ENCODE measurements at regions of chr17 and their contacts with region 1.

Region 1: DNA sequence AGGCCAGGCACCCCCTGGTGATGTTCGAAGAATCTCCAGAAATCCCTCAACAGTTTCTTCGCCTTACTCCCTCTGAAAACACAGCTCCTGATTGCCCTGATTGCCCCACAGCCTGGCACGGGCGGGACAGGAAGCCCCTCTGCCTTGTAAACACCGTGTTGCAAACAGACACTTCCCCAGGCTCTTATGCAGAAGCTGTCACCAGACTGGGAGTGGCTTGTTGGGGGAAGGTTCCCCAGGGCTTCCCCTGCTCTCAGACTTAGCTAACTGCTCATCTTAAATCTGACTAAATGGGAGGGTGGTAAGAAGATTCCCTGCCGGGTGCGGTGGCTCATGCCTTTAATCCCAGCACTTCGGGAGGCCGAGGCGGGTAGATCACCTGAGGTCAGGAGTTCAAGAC is 11.2 kb downstream of the PIK3R5 start:
- DNase-seq: peak; percentile 78
- H3K4me3 Mint-ChIP-seq: peak overlapping the region; percentile 36
- H3K27ac Mint-ChIP-seq: peak overlapping the region; percentile 73
- H3K4me1 Mint-ChIP-seq: peaks cover 97% of the 10 kb centered on the region
- H3K27me3 Mint-ChIP-seq: no peaks in the 10 kb centered on the region

Region 2: DNA sequence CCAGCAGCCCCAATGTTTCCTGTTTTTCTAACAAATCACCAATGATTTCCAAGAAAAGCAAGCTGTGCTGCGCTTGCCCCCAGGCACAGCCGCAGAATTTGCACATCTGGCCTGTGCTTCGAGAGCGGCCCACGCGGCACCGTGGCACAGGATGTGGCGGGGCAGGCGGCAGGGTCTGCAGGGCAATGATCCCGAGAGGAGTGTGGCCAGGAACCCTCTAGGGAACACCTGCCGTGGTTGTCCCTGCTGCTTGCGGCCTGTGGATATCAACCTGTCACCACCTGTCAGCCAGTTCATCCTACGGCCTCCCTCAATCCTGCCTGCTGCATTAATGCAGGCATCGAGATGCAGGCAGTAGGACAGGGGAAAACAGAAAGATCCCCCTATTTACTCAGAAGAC is 12.8 kb before region 1 on chr17:
- CTCF ChIA-PET with region 1: interaction called, 4 read pairs
- POLR2A ChIA-PET with region 1: interaction called, 64 read pairs
- DNase-seq: peak; percentile 82
- H3K4me3 Mint-ChIP-seq: peak overlapping the region; percentile 75
- H3K27ac Mint-ChIP-seq: peak overlapping the region; percentile 99
- H3K4me1 Mint-ChIP-seq: peaks cover 74% of the 10 kb centered on the region
- H3K27me3 Mint-ChIP-seq: no peaks in the 10 kb centered on the region

Measured in activated CD4-positive, alpha-beta memory T cell treated with anti-CD3 and anti-CD28 coated beads, Interleukin-2, amount 10 ng/mL, durations not matched to agents 7 days and 5 days (primary cell).